ENCODE measurements at regions of chr17 and their contacts with region 1.

Region 1: GRCh38 chr17:43338886-43339516 is 59.8 kb upstream of the ARL4D start:
- DNase-seq: no peak
- ATAC-seq: no peak
- H3K4me3 ChIP-seq: no peak overlapping the region
- H3K27ac ChIP-seq: no peak overlapping the region
- H3K4me1 ChIP-seq: peaks cover 9% of the 10 kb centered on the region
- H3K27me3 ChIP-seq: no peaks in the 10 kb centered on the region
- CTCF ChIP-seq: peak; percentile 57 to 81 (median 62)
- EP300 ChIP-seq: no peak
- POLR2A ChIP-seq: no peak
- RAD21 ChIP-seq: peak; percentile 68

Region 2: DNA sequence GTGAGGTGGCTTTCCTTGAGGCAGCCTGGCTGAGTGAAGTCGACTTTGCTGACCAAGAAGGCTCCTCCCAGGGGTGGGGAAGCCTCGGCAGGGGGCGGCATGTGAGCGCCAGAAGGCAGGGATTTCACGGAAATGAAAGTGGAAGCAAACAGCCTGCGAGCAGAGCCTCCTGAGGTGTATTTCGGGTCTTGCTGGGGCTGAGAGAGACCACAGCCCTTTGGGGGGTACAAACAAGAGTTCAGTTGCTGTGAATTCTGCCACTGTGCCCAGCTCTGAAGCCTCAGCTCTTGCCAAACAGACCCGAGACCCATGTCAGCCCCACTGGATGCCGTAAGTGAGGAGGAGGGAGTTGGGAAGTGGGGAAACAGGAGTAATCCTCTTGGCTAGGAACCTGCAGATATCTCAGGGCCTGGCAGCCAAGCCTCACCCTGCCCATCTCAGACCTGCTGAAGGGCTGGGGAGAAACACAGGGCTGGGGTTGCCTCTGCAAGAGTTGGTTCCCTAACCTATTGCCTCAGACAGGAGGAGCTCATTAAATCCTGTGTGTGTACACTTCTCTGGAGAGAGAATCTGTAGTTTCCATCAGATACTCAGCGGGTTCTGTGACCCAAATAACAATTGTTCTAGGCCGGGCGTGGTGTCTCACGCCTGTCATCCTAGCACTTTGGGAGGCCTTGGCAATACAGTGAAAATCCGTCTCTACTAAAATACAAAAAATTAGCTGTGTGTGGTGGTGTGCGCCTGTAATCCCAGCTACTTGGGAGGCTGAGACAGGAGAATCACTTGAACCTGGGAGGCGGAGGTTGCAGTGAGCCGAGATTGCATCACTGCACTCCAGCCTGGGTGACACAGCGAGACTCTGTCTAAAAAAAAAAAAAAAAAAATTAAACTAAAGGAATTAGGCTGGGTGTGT is 332.1 kb before region 1 on chr17 and contains the start of gene IFI35:
- CTCF ChIA-PET with region 1: interaction called, 8 read pairs
- POLR2A ChIA-PET with region 1: no interaction called
- RAD21 ChIA-PET with region 1: interaction called, 3 read pairs
- SMC1A ChIA-PET with region 1: no interaction called
- in situ Hi-C with region 1: loop called (anchors 5 kb)
- intact Hi-C with region 1: no loop called
- DNase-seq: peak; percentile 69
- ATAC-seq: peak; percentile 97
- H3K4me3 ChIP-seq: peak within 1 kb of the TSS; percentile 97
- H3K27ac ChIP-seq: peak within 1 kb of the TSS; percentile 97
- H3K4me1 ChIP-seq: peaks cover 6% of the 10 kb centered on the region
- H3K27me3 ChIP-seq: no peaks in the 10 kb centered on the region
- CTCF ChIP-seq: peak; percentile 23 to 79 (median 41); a peak in 5 of 6 replicates
- EP300 ChIP-seq: peak in 1 of 2 experiments; percentile 30; a peak in 1 of 4 replicates
- POLR2A ChIP-seq: peak; percentile 80
- RAD21 ChIP-seq: peak; percentile 63
- polyA plus RNA-seq, gene IFI35: 18.4 to 24.4 TPM

Region 3: GRCh38 chr17:43517615-43518386 is 178.8 kb after region 1 on chr17:
- CTCF ChIA-PET with region 1: no interaction called
- POLR2A ChIA-PET with region 1: no interaction called
- RAD21 ChIA-PET with region 1: no interaction called
- SMC1A ChIA-PET with region 1: no interaction called
- in situ Hi-C with region 1: no loop called
- intact Hi-C with region 1: no loop called
- DNase-seq: peak; percentile 82
- ATAC-seq: peak; percentile 93
- H3K4me3 ChIP-seq: no peak overlapping the region
- H3K27ac ChIP-seq: peak overlapping the region; percentile 91
- H3K4me1 ChIP-seq: peaks cover 20% of the 10 kb centered on the region
- H3K27me3 ChIP-seq: no peaks in the 10 kb centered on the region
- CTCF ChIP-seq: no peak
- EP300 ChIP-seq: no peak
- POLR2A ChIP-seq: no peak
- RAD21 ChIP-seq: no peak

Region 4: GRCh38 chr17:43979011-43979410 is 640.0 kb after region 1 on chr17:
- CTCF ChIA-PET with region 1: no interaction called
- POLR2A ChIA-PET with region 1: no interaction called
- RAD21 ChIA-PET with region 1: no interaction called
- SMC1A ChIA-PET with region 1: no interaction called
- in situ Hi-C with region 1: no loop called
- intact Hi-C with region 1: no loop called
- DNase-seq: no peak
- ATAC-seq: no peak
- H3K4me3 ChIP-seq: no peak overlapping the region
- H3K27ac ChIP-seq: no peak overlapping the region
- H3K4me1 ChIP-seq: no peaks in the 10 kb centered on the region
- H3K27me3 ChIP-seq: peaks cover 5 to 12% of the 10 kb centered on the region in 2 experiments
- CTCF ChIP-seq: no peak
- EP300 ChIP-seq: no peak
- POLR2A ChIP-seq: no peak
- RAD21 ChIP-seq: no peak